Activated CD4-positive, alpha-beta T cell treated with anti-CD3 and anti-CD28 coated beads, Interleukin-2, amount 10 ng/mL, durations not matched to agents 24 days and 14 days (primary cell): ENCODE measurements at regions of chrX and their contacts with region 1.

Region 1: GRCh38 chrX:8738588-8739189 is 6.8 kb upstream of the ANOS1 start:
- DNase-seq: peak; percentile 60
- H3K4me3 Mint-ChIP-seq: no peak overlapping the region
- H3K27ac Mint-ChIP-seq: no peak overlapping the region
- H3K4me1 Mint-ChIP-seq: no peaks in the 10 kb centered on the region
- H3K27me3 Mint-ChIP-seq: peaks cover 3% of the 10 kb centered on the region

Region 2: GRCh38 chrX:7996414-7996813 is 742.3 kb before region 1 on chrX:
- intact Hi-C with region 1: loop called (anchors 1 kb)
- DNase-seq: peak; percentile 60
- H3K4me3 Mint-ChIP-seq: no peak overlapping the region
- H3K27ac Mint-ChIP-seq: no peak overlapping the region
- H3K4me1 Mint-ChIP-seq: no peaks in the 10 kb centered on the region
- H3K27me3 Mint-ChIP-seq: no peaks in the 10 kb centered on the region

Region 3: GRCh38 chrX:8284131-8284530 is 454.6 kb before region 1 on chrX:
- intact Hi-C with region 1: no loop called
- DNase-seq: no peak
- H3K4me3 Mint-ChIP-seq: no peak overlapping the region
- H3K27ac Mint-ChIP-seq: no peak overlapping the region
- H3K4me1 Mint-ChIP-seq: no peaks in the 10 kb centered on the region
- H3K27me3 Mint-ChIP-seq: no peaks in the 10 kb centered on the region

Region 4: GRCh38 chrX:8323356-8323755 is 415.3 kb before region 1 on chrX:
- intact Hi-C with region 1: no loop called
- DNase-seq: no peak
- H3K4me3 Mint-ChIP-seq: no peak overlapping the region
- H3K27ac Mint-ChIP-seq: no peak overlapping the region
- H3K4me1 Mint-ChIP-seq: no peaks in the 10 kb centered on the region
- H3K27me3 Mint-ChIP-seq: no peaks in the 10 kb centered on the region

Region 5: DNA sequence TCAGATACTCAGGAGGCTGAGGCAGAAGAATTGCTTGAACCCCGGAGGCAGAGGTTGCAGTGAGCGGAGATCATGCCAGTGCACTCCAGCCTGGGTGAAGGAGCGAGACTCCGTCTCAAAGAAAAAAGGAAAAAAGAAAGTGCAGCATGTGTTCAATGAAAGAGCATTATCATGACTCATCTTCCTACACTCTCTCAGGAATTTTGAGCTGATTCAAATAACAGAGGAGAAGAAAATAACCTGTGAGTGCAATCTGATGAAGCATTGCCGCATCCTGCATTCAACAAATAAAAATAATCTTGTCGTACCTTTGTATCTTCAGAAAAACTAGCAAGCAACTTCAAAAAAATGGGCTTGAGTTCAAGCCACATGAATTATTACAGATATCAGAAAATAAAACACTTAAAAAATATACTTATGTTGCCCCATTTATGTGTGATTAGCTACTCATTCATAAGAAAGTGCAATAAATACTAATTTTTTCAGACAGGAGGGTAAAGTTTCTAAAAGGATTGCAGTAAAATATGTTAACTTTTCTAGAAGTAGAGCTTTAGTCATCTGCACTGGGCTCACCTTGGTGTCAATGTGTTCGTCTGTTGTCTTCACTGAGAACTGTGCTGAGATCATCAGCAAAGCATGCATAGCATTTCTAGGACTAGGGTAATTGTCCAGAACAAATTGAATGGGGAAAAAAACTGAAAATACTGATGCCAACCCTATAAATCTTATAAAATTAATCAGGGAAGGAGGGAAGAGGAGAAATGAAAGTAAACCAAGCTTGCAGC is 364.5 kb before region 1 on chrX:
- intact Hi-C with region 1: no loop called
- DNase-seq: no peak
- H3K4me3 Mint-ChIP-seq: no peak overlapping the region
- H3K27ac Mint-ChIP-seq: no peak overlapping the region
- H3K4me1 Mint-ChIP-seq: no peaks in the 10 kb centered on the region
- H3K27me3 Mint-ChIP-seq: no peaks in the 10 kb centered on the region